ENCODE measurements at regions of chrX and their contacts with region 1.

Region 1: DNA sequence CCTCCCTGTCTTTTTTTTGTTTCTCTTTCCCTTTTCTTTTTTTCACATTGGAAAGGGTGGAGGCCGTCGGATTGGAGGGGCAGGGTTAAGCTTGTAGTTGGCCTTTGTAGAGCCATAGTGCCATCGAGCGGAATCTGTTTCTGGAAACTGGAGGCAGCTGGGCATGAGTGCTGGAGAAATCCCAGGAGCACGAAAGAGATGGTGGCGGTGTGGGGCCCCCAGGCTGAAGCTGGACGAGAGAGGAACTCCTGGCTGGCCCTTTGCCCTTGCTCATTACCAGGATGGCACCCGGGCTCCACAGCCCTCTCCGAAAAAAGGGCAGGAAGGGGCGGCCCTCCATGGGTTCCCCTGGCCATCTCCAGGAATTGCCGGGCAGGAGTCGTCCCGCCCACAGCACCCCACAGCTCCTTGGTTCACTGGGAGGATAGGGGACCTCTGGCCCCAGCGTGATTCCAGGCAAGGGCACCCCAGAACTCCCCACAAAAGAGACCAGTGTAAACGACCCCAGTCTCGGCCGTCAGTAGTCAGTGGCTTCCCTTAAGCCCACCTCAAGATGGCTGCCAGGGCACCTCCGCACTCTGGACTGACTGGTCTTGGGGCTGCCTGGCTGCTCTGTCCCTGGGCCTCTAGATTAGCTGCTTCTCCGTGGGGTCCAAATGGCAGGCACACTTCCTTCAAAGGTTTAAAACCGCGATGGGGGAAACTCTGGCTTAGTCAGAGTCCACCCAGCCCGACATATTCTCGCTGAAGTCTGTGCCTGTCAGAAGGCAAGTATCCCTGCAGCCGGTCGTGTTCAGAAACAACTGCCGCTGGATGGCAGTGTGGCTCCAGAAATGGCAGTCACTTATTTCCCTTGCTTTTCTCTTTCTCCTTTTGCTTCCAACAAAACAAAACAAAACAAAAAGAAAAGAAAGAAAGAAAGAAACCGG is 74.1 kb downstream of the NBDY start:
- DNase-seq: peak; percentile 17 to 63 (median 24)
- ATAC-seq: peak; percentile 89
- H3K4me3 ChIP-seq: no peak overlapping the region
- H3K27ac ChIP-seq: no peak overlapping the region
- H3K4me1 ChIP-seq: peaks cover 0 to 3% of the 10 kb centered on the region in 2 experiments; a peak in 1 of 5 replicates
- H3K27me3 ChIP-seq: no peaks in the 10 kb centered on the region
- CTCF ChIP-seq: peak; percentile 56 to 71 (median 56)
- EP300 ChIP-seq: no peak
- POLR2A ChIP-seq: no peak
- RAD21 ChIP-seq: peak; percentile 49 to 68

Region 2: DNA sequence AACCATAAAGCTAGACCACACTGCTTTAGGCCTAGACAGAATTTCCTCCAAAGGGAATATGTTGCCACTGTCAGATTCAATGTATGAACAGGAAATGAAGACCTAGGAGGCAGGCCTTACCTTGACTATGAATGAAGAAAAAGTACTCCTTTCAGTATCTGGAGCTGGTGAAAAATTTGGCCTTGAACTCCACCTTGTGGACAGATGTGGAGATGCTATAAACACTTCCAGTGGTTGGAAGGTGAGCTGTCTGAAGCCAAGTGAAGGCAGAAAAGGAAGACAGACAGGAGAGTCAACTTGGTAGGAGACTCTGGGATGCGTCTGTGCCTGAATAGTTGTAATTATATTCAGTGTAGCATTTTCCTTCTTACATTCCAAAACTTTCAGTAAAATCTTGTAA is 175.0 kb after region 1 on chrX:
- CTCF ChIA-PET with region 1: interaction called, 5 read pairs
- POLR2A ChIA-PET with region 1: no interaction called
- in situ Hi-C with region 1: no loop called
- intact Hi-C with region 1: loop called (anchors 1 kb)
- DNase-seq: peak; percentile 17 to 42 (median 22)
- ATAC-seq: peak; percentile 85
- H3K4me3 ChIP-seq: no peak overlapping the region
- H3K27ac ChIP-seq: no peak overlapping the region
- H3K4me1 ChIP-seq: no peaks in the 10 kb centered on the region
- H3K27me3 ChIP-seq: no peaks in the 10 kb centered on the region
- CTCF ChIP-seq: peak; percentile 45 to 62 (median 46); a peak in 5 of 6 replicates
- EP300 ChIP-seq: no peak
- POLR2A ChIP-seq: no peak
- RAD21 ChIP-seq: peak; percentile 27 to 64; a peak in 3 of 4 replicates

Measured in K562 (cell line).